ENCODE measurements at regions of chr6 and their contacts with region 1.

Region 1: GRCh38 chr6:146700078-146700686 is 101.4 kb downstream of the ADGB start:
- DNase-seq: peak; percentile 69
- H3K4me3 Mint-ChIP-seq: no peak overlapping the region
- H3K27ac Mint-ChIP-seq: no peak overlapping the region
- H3K4me1 Mint-ChIP-seq: no peaks in the 10 kb centered on the region
- H3K27me3 Mint-ChIP-seq: no peaks in the 10 kb centered on the region
- CTCF ChIP-seq: peak; percentile 15

Region 2: GRCh38 chr6:145929037-145929633 is 771.0 kb before region 1 on chr6:
- CTCF ChIA-PET with region 1: no interaction called
- intact Hi-C with region 1: loop called (anchors 2 kb)
- DNase-seq: no peak
- H3K4me3 Mint-ChIP-seq: no peak overlapping the region
- H3K27ac Mint-ChIP-seq: no peak overlapping the region
- H3K4me1 Mint-ChIP-seq: no peaks in the 10 kb centered on the region
- H3K27me3 Mint-ChIP-seq: no peaks in the 10 kb centered on the region
- CTCF ChIP-seq: no peak

Region 3: GRCh38 chr6:146456886-146457285 is 243.3 kb before region 1 on chr6:
- CTCF ChIA-PET with region 1: no interaction called
- intact Hi-C with region 1: loop called (anchors 1 kb)
- DNase-seq: no peak
- H3K4me3 Mint-ChIP-seq: no peak overlapping the region
- H3K27ac Mint-ChIP-seq: no peak overlapping the region
- H3K4me1 Mint-ChIP-seq: no peaks in the 10 kb centered on the region
- H3K27me3 Mint-ChIP-seq: peaks cover 20% of the 10 kb centered on the region
- CTCF ChIP-seq: no peak

Region 4: DNA sequence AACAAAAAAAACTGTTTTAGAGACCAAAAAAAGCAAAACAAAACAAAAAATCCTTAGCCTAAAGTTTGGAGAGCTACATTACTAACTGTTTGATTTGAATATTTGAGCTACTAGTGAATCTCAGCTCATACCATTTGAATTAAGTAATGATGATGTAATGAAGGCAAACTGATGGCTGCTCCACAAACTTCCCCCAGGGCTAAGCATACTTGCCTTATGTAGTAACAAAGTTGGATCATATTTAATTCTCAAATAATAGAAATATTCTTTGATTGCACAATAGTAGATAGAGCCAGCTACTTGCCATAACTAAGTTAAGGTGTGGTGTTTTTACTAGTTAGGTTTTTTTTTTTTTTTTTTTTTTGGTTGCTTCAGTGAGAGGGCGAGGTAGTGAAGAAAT is 153.7 kb before region 1 on chr6:
- CTCF ChIA-PET with region 1: no interaction called
- intact Hi-C with region 1: loop called (anchors 5 kb)
- DNase-seq: peak; percentile 28
- H3K4me3 Mint-ChIP-seq: peak overlapping the region; percentile 90
- H3K27ac Mint-ChIP-seq: peak overlapping the region; percentile 91
- H3K4me1 Mint-ChIP-seq: peaks cover 7% of the 10 kb centered on the region
- H3K27me3 Mint-ChIP-seq: no peaks in the 10 kb centered on the region
- CTCF ChIP-seq: no peak